ENCODE measurements at regions of chr2 and their contacts with region 1.

Region 1: DNA sequence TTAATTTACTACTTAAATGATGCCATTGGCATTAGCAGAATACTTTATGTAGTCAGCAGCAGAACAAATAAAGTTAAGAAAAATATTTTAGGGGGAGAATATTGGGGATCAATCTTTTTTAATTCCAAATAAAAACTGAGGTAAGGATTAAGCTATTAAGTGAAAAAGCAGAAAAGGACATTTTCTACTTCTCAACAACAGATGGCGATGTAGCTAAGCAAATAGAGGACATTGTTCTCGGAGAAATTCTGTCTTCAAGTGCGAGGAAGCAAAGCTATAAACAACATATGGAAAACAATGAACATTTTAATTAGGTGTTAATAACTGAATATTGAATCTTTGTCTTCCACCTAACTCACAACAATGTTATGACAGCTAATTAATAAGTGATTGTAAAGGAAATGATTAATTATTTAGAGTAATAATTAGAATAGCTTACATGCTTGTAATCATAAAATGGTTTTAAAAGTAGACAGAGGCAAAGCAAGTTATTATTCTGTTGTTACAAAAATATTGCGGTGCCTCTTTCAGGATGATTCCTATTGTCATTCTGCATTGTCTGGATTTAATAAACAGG is 32.9 kb upstream of the CCDC93 start:
- DNase-seq: peak; percentile 60
- H3K4me3 ChIP-seq: no peak overlapping the region
- H3K27ac ChIP-seq: no peak overlapping the region
- H3K4me1 ChIP-seq: peaks cover 26% of the 10 kb centered on the region
- H3K27me3 ChIP-seq: peaks cover 10 to 13% of the 10 kb centered on the region in 2 experiments
- CTCF ChIP-seq: peak; percentile 41 to 44
- POLR2A ChIP-seq: no peak

Region 2: GRCh38 chr2:116917196-116917595 is 1129.5 kb before region 1 on chr2:
- CTCF ChIA-PET with region 1: no interaction called
- POLR2A ChIA-PET with region 1: no interaction called
- dilution Hi-C with region 1: no loop called
- intact Hi-C with region 1: no loop called
- DNase-seq: no peak
- H3K4me3 ChIP-seq: no peak overlapping the region
- H3K27ac ChIP-seq: no peak overlapping the region
- H3K4me1 ChIP-seq: no peaks in the 10 kb centered on the region
- H3K27me3 ChIP-seq: no peaks in the 10 kb centered on the region
- CTCF ChIP-seq: no peak
- POLR2A ChIP-seq: no peak

Region 3: GRCh38 chr2:117723888-117724434 is 322.8 kb before region 1 on chr2:
- CTCF ChIA-PET with region 1: no interaction called
- POLR2A ChIA-PET with region 1: no interaction called
- dilution Hi-C with region 1: no loop called
- intact Hi-C with region 1: no loop called
- DNase-seq: no peak
- H3K4me3 ChIP-seq: no peak overlapping the region
- H3K27ac ChIP-seq: no peak overlapping the region
- H3K4me1 ChIP-seq: no peaks in the 10 kb centered on the region
- H3K27me3 ChIP-seq: no peaks in the 10 kb centered on the region
- CTCF ChIP-seq: no peak
- POLR2A ChIP-seq: no peak

Region 4: DNA sequence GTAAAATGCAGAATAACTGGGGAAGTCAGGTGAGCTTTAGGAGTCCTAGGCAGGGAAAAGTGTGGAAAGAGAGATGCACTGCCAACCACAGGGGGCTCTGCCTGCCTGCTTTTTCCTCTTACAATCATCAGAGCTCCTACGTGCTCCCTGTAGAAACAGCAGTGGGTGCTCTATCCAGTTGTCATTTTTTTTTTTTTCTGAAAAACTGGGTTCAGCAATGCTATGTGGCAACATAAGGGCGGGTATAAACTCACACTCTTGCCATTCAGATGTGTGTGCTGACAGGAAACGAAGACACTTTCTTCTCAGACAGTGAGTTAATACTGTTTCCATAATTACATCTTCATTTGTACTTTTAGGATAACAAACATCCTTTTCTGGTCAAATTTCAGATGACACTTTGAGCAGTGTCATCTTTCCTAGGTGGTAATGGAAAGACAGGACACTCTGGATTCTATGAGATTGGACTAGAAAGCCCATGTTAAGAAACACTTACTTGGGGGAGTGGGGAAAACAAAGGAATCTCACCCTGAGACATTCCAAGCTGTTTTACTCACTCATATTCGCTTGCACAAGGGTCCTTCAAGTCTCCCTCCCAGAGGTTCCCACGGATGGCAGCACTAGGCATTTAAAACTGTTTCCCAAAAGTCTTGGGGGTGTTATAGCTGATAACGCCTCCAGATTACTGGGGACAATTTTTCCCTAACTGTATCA is 74.1 kb before region 1 on chr2:
- CTCF ChIA-PET with region 1: no interaction called
- POLR2A ChIA-PET with region 1: no interaction called
- dilution Hi-C with region 1: no loop called
- intact Hi-C with region 1: no loop called
- DNase-seq: no peak
- H3K4me3 ChIP-seq: no peak overlapping the region
- H3K27ac ChIP-seq: no peak overlapping the region
- H3K4me1 ChIP-seq: no peaks in the 10 kb centered on the region
- H3K27me3 ChIP-seq: no peaks in the 10 kb centered on the region
- CTCF ChIP-seq: no peak
- POLR2A ChIP-seq: no peak

Region 5: GRCh38 chr2:118032169-118033013 is 14.3 kb before region 1 on chr2:
- CTCF ChIA-PET with region 1: interaction called, 81 read pairs
- POLR2A ChIA-PET with region 1: no interaction called
- dilution Hi-C with region 1: no loop called
- intact Hi-C with region 1: no loop called
- DNase-seq: peak; percentile 36
- H3K4me3 ChIP-seq: no peak overlapping the region
- H3K27ac ChIP-seq: no peak overlapping the region
- H3K4me1 ChIP-seq: no peaks in the 10 kb centered on the region
- H3K27me3 ChIP-seq: peaks cover 2 to 7% of the 10 kb centered on the region in 2 experiments
- CTCF ChIP-seq: peak; percentile 65 to 72
- POLR2A ChIP-seq: no peak

Region 6: DNA sequence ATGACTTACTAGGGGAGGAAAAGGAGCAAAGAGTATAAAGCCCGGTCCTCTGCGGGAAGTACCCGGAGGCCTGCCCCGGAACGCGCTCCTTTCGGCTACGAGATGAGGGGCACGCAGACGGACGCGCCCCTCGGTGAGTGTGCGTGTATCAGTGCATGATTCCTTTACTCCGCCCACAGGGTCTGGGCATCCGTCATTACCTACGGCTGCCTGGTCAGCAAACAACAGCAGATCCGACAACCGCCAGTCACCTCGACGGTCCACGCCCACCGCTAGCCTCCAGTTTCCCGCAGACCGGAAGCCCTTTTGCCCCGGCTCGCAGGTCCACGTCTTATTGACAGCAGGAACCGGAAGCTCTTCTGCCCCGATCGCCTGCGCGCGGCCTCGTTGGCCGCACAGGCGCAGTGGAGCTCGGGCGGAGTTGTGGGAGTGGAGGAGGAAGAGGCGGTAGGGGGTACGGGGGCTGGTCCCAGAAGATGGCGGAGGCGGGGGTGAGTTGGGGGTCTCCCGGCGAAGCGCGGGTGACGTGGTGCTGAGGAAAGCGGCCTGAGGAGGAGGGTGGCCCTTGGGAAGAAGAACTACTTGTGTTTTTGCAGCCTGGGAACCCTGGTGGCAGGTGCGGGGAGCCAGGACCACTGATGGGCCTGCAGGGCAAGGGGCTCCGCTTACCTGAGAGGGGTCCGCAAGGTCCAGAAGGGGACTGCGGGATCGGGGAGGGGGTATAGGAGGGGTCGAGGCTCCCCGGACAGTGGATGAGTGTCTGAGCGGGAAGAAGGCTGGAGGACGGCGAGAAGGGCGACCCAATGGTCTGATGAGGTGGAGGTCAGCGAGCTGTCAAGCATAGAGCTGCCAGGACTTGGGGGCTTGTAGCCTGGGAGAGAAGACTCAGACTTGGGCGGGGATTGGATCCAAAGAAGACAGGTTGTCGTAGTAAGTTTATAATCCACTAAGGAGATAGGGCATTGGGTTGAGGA is 41.6 kb after region 1 on chr2 and contains the start of gene INSIG2:
- CTCF ChIA-PET with region 1: interaction called, 39 read pairs
- POLR2A ChIA-PET with region 1: no interaction called
- dilution Hi-C with region 1: no loop called
- intact Hi-C with region 1: loop called (anchors 1 kb)
- DNase-seq: peak; percentile 89
- H3K4me3 ChIP-seq: peak within 1 kb of the TSS; percentile 69 to 94 (median 93)
- H3K27ac ChIP-seq: peak within 1 kb of the TSS; percentile 78
- H3K4me1 ChIP-seq: peaks cover 20% of the 10 kb centered on the region
- H3K27me3 ChIP-seq: peaks cover 17 to 22% of the 10 kb centered on the region in 2 experiments
- CTCF ChIP-seq: no peak
- POLR2A ChIP-seq: peak; percentile 40
- total RNA-seq, gene INSIG2: 19.7 and 26.9 TPM in 2 replicates

Region 7: GRCh38 chr2:118154176-118154575 is 107.5 kb after region 1 on chr2:
- CTCF ChIA-PET with region 1: interaction called, 112 read pairs
- POLR2A ChIA-PET with region 1: no interaction called
- dilution Hi-C with region 1: no loop called
- intact Hi-C with region 1: loop called (anchors 1 kb)
- DNase-seq: no peak
- H3K4me3 ChIP-seq: no peak overlapping the region
- H3K27ac ChIP-seq: no peak overlapping the region
- H3K4me1 ChIP-seq: no peaks in the 10 kb centered on the region
- H3K27me3 ChIP-seq: peaks cover under 1 to 6% of the 10 kb centered on the region in 2 experiments
- CTCF ChIP-seq: no peak
- POLR2A ChIP-seq: no peak

Region 8: GRCh38 chr2:118202707-118203303 is 156.1 kb after region 1 on chr2:
- CTCF ChIA-PET with region 1: interaction called, 26 read pairs
- POLR2A ChIA-PET with region 1: no interaction called
- dilution Hi-C with region 1: no loop called
- intact Hi-C with region 1: loop called (anchors 2 kb)
- DNase-seq: peak; percentile 43
- H3K4me3 ChIP-seq: no peak overlapping the region
- H3K27ac ChIP-seq: no peak overlapping the region
- H3K4me1 ChIP-seq: no peaks in the 10 kb centered on the region
- H3K27me3 ChIP-seq: peaks cover 2 to 11% of the 10 kb centered on the region in 2 experiments
- CTCF ChIP-seq: peak; percentile 86 to 92
- POLR2A ChIP-seq: no peak

Region 9: DNA sequence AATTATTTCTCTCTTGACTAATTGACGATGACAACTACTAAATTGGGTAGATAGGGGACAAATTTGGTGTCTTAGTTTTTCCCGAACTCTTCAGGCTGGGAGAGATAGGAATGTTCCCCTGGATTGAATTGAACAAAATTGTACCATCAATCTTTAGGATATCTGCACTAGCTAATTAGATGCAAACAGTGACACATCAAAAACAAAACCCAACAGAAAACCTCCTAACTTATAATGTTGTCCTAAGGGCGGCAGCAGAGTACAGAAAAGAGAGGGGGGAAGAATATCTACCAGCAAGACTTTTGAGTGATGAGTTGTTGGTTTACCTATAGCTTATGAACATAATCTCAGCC is 384.4 kb after region 1 on chr2:
- CTCF ChIA-PET with region 1: no interaction called
- POLR2A ChIA-PET with region 1: no interaction called
- dilution Hi-C with region 1: no loop called
- intact Hi-C with region 1: no loop called
- DNase-seq: no peak
- H3K4me3 ChIP-seq: no peak overlapping the region
- H3K27ac ChIP-seq: no peak overlapping the region
- H3K4me1 ChIP-seq: no peaks in the 10 kb centered on the region
- H3K27me3 ChIP-seq: no peaks in the 10 kb centered on the region
- CTCF ChIP-seq: no peak
- POLR2A ChIP-seq: no peak

Region 10: DNA sequence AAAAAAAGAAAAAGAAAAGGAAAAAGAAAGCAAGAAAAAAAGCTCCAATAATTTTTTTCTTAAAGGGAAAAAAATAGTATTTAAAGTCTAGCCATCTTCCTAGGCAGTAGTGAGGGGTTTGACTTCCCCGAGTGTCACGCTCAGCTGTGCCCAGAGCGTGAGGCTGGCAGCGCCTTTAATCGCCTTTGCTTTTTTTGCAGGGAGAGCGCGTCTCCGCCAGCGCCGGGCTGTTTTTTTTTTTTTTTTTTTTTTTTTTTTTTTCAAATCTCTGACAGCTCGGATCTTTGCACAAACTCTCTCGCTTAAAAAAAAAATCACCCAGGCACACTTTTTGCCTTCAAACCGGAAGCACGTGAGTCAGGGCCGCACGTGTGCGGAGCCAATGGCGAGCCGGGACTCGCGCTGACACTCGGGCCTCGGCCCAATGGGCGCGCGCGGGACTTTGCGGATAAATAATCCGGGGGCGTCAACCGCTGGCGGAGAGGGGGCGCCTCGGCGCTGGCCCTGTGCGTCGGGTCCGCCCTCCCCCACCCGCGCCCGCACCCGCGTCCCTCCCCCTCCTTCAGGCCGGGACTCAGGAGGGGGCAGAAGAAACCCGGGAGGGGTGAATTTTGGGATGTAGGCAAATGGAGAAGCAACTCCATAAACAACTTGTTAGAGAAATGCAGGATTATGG is 800.9 kb after region 1 on chr2 and contains the start of gene EN1:
- CTCF ChIA-PET with region 1: interaction called, 21 read pairs
- POLR2A ChIA-PET with region 1: no interaction called
- dilution Hi-C with region 1: no loop called
- intact Hi-C with region 1: no loop called
- DNase-seq: no peak
- H3K4me3 ChIP-seq: no peak within 1 kb of the TSS
- H3K27ac ChIP-seq: no peak within 1 kb of the TSS
- H3K4me1 ChIP-seq: peaks cover 4% of the 10 kb centered on the region
- H3K27me3 ChIP-seq: peaks cover 87 to 94% of the 10 kb centered on the region in 2 experiments
- CTCF ChIP-seq: no peak
- POLR2A ChIP-seq: no peak
- total RNA-seq, gene EN1: not detected in 2 replicates

Measured in endothelial cell of umbilical vein (primary cell).